ENCODE measurements at regions of chr13 and their contacts with region 1.

Region 1: GRCh38 chr13:106063591-106064313 is 471.7 kb downstream of the EFNB2 start:
- DNase-seq: no peak
- H3K4me3 ChIP-seq: no peak overlapping the region
- H3K27ac ChIP-seq: no peak overlapping the region
- H3K4me1 ChIP-seq: no peaks in the 10 kb centered on the region
- H3K27me3 ChIP-seq: no peaks in the 10 kb centered on the region
- CTCF ChIP-seq: no peak
- EP300 ChIP-seq: no peak
- POLR2A ChIP-seq: no peak

Region 2: GRCh38 chr13:105684216-105684615 is 379.5 kb before region 1 on chr13:
- in situ Hi-C with region 1: no loop called
- intact Hi-C with region 1: no loop called
- DNase-seq: no peak
- H3K4me3 ChIP-seq: no peak overlapping the region
- H3K27ac ChIP-seq: no peak overlapping the region
- H3K4me1 ChIP-seq: no peaks in the 10 kb centered on the region
- H3K27me3 ChIP-seq: no peaks in the 10 kb centered on the region
- CTCF ChIP-seq: no peak
- EP300 ChIP-seq: no peak
- POLR2A ChIP-seq: no peak

Region 3: GRCh38 chr13:106099765-106100164 is 36.0 kb after region 1 on chr13:
- in situ Hi-C with region 1: no loop called
- intact Hi-C with region 1: loop called (anchors 2 kb)
- DNase-seq: peak; percentile 39
- H3K4me3 ChIP-seq: peak overlapping the region in 1 of 4 donors; percentile 8
- H3K27ac ChIP-seq: peak overlapping the region; percentile 87 to 89 (median 88)
- H3K4me1 ChIP-seq: peaks cover 9 to 58% (median 29%) of the 10 kb centered on the region in 4 donors
- H3K27me3 ChIP-seq: no peaks in the 10 kb centered on the region
- CTCF ChIP-seq: no peak
- EP300 ChIP-seq: no peak
- POLR2A ChIP-seq: no peak

Measured in transverse colon (tissue), 4 donors.